ENCODE measurements at regions of chr22 and their contacts with region 1.

Region 1: GRCh38 chr22:28594797-28595462 is 84.7 kb downstream of the TTC28 start:
- DNase-seq: no peak
- ATAC-seq: peak; percentile 70 to 92 (median 90)
- H3K4me3 ChIP-seq: no peak overlapping the region
- H3K27ac ChIP-seq: no peak overlapping the region
- H3K4me1 ChIP-seq: peaks cover 0 to 8% (median 0%) of the 10 kb centered on the region in 9 donors
- H3K27me3 ChIP-seq: no peaks in the 10 kb centered on the region
- CTCF ChIP-seq: peak; percentile 49 to 91 (median 76)

Region 2: GRCh38 chr22:28019881-28020871 is 574.8 kb before region 1 on chr22:
- intact Hi-C with region 1: loop called in 9 of 10 experiments (anchors 1 to 10 kb)
- DNase-seq: peak; percentile 74 to 78
- ATAC-seq: peak; percentile 69 to 83 (median 74)
- H3K4me3 ChIP-seq: no peak overlapping the region
- H3K27ac ChIP-seq: peak overlapping the region in 1 of 10 donors; percentile 1
- H3K4me1 ChIP-seq: peaks cover 6 to 58% (median 23%) of the 10 kb centered on the region in 9 donors
- H3K27me3 ChIP-seq: no peaks in the 10 kb centered on the region
- CTCF ChIP-seq: peak; percentile 85 to 98 (median 96)

Region 3: GRCh38 chr22:28051787-28052356 is 543.1 kb before region 1 on chr22:
- intact Hi-C with region 1: loop called (anchors 1 to 10 kb)
- DNase-seq: peak; percentile 72 to 81
- ATAC-seq: peak in 7 of 8 donors; percentile 50 to 73 (median 71)
- H3K4me3 ChIP-seq: no peak overlapping the region
- H3K27ac ChIP-seq: no peak overlapping the region
- H3K4me1 ChIP-seq: peaks cover 0 to 31% (median 7%) of the 10 kb centered on the region in 9 donors
- H3K27me3 ChIP-seq: no peaks in the 10 kb centered on the region
- CTCF ChIP-seq: peak; percentile 77 to 95 (median 87)

Region 4: DNA sequence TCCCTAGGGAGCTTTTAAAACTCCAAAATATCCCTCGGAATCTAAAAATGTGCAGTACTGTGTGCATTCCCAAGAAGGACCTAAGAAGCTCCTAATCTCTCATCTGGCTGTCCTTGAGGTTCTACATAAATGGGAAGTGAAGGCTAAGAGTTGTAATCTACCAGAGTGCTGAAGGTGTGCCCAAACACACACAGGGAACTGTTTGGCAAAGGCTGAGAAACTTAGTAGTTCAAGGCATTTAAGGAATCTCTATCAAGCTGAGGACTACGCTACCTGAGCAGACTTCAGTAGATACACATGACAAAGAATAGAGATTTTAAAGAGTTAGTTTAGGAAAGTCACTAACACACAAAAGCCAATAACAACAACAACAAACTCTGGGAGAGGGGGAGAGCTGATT is 13.6 kb after region 1 on chr22:
- intact Hi-C with region 1: no loop called
- DNase-seq: no peak
- ATAC-seq: no peak
- H3K4me3 ChIP-seq: no peak overlapping the region
- H3K27ac ChIP-seq: no peak overlapping the region
- H3K4me1 ChIP-seq: peaks cover 0 to 21% (median 2%) of the 10 kb centered on the region in 9 donors
- H3K27me3 ChIP-seq: no peaks in the 10 kb centered on the region
- CTCF ChIP-seq: no peak

Region 5: GRCh38 chr22:28829358-28830181 is 234.6 kb after region 1 on chr22:
- intact Hi-C with region 1: loop called in 8 of 10 experiments (anchors 1 to 5 kb)
- DNase-seq: peak; percentile 67 to 74
- ATAC-seq: peak; percentile 78 to 93 (median 88)
- H3K4me3 ChIP-seq: no peak overlapping the region
- H3K27ac ChIP-seq: peak overlapping the region in 1 of 10 donors; percentile 29
- H3K4me1 ChIP-seq: peaks cover 0 to 12% (median 0%) of the 10 kb centered on the region in 9 donors
- H3K27me3 ChIP-seq: no peaks in the 10 kb centered on the region
- CTCF ChIP-seq: peak; percentile 97 to 99 (median 98)

Region 6: GRCh38 chr22:29004647-29005371 is 409.9 kb after region 1 on chr22:
- intact Hi-C with region 1: no loop called
- DNase-seq: peak; percentile 20 to 42
- ATAC-seq: peak; percentile 57 to 84 (median 79)
- H3K4me3 ChIP-seq: peak overlapping the region in 6 of 10 donors; percentile 9 to 31 (median 18)
- H3K27ac ChIP-seq: peak overlapping the region in 7 of 10 donors; percentile 25 to 65 (median 49)
- H3K4me1 ChIP-seq: peaks cover 0 to 40% (median 27%) of the 10 kb centered on the region in 9 donors
- H3K27me3 ChIP-seq: peaks cover 0 to 8% (median 0%) of the 10 kb centered on the region in 7 donors
- CTCF ChIP-seq: no peak